Activated CD4-positive, alpha-beta memory T cell treated with anti-CD3 and anti-CD28 coated beads, Interleukin-2, amount 10 ng/mL, durations not matched to agents 7 days and 5 days (primary cell): ENCODE measurements at regions of chr13 and their contacts with region 1.

Region 1: GRCh38 chr13:72727417-72728289 is at the starts of genes BORA and MZT1:
- DNase-seq: peak; percentile 97
- H3K4me3 Mint-ChIP-seq: peak within 1 kb of the TSS; percentile 92
- H3K27ac Mint-ChIP-seq: peak within 1 kb of the TSS; percentile 84
- H3K4me1 Mint-ChIP-seq: peaks cover 56% of the 10 kb centered on the region
- H3K27me3 Mint-ChIP-seq: no peaks in the 10 kb centered on the region
- total RNA-seq, gene BORA: 25.6 to 28.5 TPM
- total RNA-seq, gene MZT1: 20.7 to 22.3 TPM

Region 2: DNA sequence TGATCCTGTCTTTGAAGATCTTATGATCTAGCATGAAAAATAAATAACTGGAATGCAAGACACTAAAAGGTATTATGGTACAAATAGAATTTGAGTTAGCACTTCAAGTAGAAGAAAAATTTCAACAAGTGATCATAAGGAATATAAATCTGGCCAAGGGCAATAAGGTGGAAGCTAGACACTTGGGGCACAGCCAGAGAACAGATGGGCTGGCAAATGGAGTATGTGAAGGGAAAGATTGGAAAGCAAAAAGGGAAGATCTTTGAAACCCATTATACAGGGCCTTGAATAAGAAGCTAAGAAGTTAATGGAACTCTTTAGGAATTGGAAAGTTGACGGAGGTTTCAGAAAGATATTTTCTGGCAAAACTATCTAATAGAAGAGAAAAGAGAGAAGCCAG is 61.3 kb before region 1 on chr13:
- CTCF ChIA-PET with region 1: no interaction called
- POLR2A ChIA-PET with region 1: no interaction called
- DNase-seq: no peak
- H3K4me3 Mint-ChIP-seq: no peak overlapping the region
- H3K27ac Mint-ChIP-seq: no peak overlapping the region
- H3K4me1 Mint-ChIP-seq: no peaks in the 10 kb centered on the region
- H3K27me3 Mint-ChIP-seq: peaks cover 11% of the 10 kb centered on the region

Region 3: GRCh38 chr13:72781451-72782439 is 54.1 kb after region 1 on chr13 and contains the starts of genes DIS3 and PIBF1:
- CTCF ChIA-PET with region 1: interaction called, 3 read pairs
- POLR2A ChIA-PET with region 1: interaction called, 26 read pairs
- DNase-seq: peak; percentile 98
- H3K4me3 Mint-ChIP-seq: peak within 1 kb of the TSS; percentile 95
- H3K27ac Mint-ChIP-seq: peak within 1 kb of the TSS; percentile 93
- H3K4me1 Mint-ChIP-seq: peaks cover 63% of the 10 kb centered on the region
- H3K27me3 Mint-ChIP-seq: no peaks in the 10 kb centered on the region
- total RNA-seq, gene DIS3: 31.2 to 33.6 TPM
- total RNA-seq, gene PIBF1: 19.1 to 21.8 TPM